Spleen (tissue), 13 donors: ENCODE measurements at regions of chr1 and their contacts with region 1.

Region 1: GRCh38 chr1:230978491-230979388 is at the starts of genes ARV1 and TTC13:
- DNase-seq: peak; percentile 100
- H3K4me3 ChIP-seq: peak within 1 kb of the TSS; percentile 78 to 99 (median 94)
- H3K27ac ChIP-seq: peak within 1 kb of the TSS; percentile 73 to 92 (median 84)
- H3K4me1 ChIP-seq: peaks cover 17 to 64% (median 37%) of the 10 kb centered on the region in 6 donors
- H3K27me3 ChIP-seq: no peaks in the 10 kb centered on the region
- CTCF ChIP-seq: peak in 10 of 11 experiments; percentile 32 to 87 (median 67)
- POLR2A ChIP-seq: peak in 2 of 3 donors; percentile 16 to 53
- total RNA-seq, gene ARV1: 11.8 to 27.4 (median 18.0) TPM
- total RNA-seq, gene TTC13: 27.0 to 86.6 (median 41.2) TPM

Region 2: GRCh38 chr1:230825063-230825721 is 153.5 kb before region 1 on chr1:
- intact Hi-C with region 1: no loop called
- DNase-seq: no peak
- H3K4me3 ChIP-seq: no peak overlapping the region
- H3K27ac ChIP-seq: no peak overlapping the region
- H3K4me1 ChIP-seq: peaks cover 0 to 6% (median 0%) of the 10 kb centered on the region in 6 donors
- H3K27me3 ChIP-seq: peaks cover 0 to 3% (median 0%) of the 10 kb centered on the region in 7 donors
- CTCF ChIP-seq: no peak
- POLR2A ChIP-seq: no peak

Region 3: DNA sequence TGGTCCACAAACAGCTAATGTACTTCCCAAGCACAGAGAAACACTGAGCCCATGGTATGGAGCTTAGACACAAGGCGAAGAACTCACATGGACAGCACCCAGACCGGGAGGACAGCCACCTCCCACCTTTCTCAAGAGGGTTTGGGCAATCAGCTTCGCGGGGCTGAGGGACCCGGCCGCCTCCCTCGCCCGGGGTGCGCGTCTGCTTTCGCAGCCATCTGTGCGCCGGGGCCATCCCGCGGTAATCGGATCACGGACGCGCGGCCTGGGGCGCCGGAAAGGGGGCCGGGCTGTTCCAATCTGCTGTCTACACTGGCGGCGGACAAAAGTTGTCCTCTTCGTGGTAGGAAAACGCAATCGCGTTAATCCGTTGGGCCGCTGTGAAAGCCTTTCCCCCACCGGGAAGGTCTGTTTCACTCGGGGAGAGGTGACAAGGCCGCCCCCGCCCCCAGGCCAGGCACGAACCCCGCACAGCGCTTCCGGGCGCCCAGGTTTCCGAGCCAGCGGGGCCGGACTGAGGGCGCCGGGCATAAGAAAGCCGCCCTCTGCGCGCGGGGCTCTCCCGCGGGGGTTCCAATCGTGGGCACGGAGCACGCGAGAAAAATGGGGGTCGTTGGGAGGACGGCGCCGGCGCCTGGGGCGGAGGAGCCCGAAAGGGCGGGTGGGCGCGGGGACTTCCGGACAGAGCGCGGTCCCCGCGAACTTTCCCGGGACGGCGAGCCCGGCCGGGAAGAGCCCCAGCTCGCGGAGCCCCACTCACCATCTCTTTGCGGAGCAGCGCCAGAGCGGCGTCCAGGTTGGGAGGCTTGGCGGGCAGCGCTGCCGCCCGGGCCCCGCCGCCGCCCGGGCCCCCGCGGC is 60.6 kb after region 1 on chr1:
- intact Hi-C with region 1: loop called (anchors 5 kb)
- DNase-seq: peak; percentile 87
- H3K4me3 ChIP-seq: peak overlapping the region; percentile 84 to 100 (median 94)
- H3K27ac ChIP-seq: peak overlapping the region; percentile 8 to 87 (median 82)
- H3K4me1 ChIP-seq: peaks cover 11 to 66% (median 41%) of the 10 kb centered on the region in 6 donors
- H3K27me3 ChIP-seq: peaks cover 0 to 23% (median 0%) of the 10 kb centered on the region in 7 donors
- CTCF ChIP-seq: no peak
- POLR2A ChIP-seq: no peak